Esophagus muscularis mucosa (tissue), 4 donors: ENCODE measurements at regions of chr4 and their contacts with region 1.

Region 1: GRCh38 chr4:189202182-189202868 is 738.3 kb upstream of the FRG1 start:
- DNase-seq: no peak
- H3K4me3 ChIP-seq: peak overlapping the region; percentile 15 to 48 (median 30)
- H3K27ac ChIP-seq: no peak overlapping the region
- H3K4me1 ChIP-seq: peaks cover 6 to 13% (median 12%) of the 10 kb centered on the region in 4 donors
- H3K27me3 ChIP-seq: no peaks in the 10 kb centered on the region
- CTCF ChIP-seq: peak; percentile 80 to 93 (median 86)
- EP300 ChIP-seq: no peak
- POLR2A ChIP-seq: no peak

Region 2: DNA sequence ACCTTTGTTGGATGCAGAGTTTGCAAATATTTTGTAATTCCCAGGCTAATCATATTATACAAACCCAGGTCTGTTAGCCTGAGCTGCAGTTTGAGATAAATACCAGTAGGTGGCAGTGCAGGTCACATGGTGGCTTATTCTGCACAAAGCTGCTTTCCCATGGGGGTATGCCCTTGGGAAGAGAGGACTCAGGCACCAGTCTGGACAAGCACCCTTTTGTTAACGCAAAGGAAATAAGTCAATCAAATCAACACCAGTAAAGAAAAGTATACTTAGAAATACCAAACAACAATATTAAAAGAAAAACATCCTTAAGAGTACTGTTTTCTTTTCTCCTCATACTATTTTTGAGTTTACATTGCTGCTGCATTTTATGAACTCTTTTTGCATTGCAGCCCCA is 1595.7 kb before region 1 on chr4:
- intact Hi-C with region 1: loop called (anchors 10 kb)
- DNase-seq: no peak
- H3K4me3 ChIP-seq: no peak overlapping the region
- H3K27ac ChIP-seq: no peak overlapping the region
- H3K4me1 ChIP-seq: peaks cover 0 to 11% (median 4%) of the 10 kb centered on the region in 4 donors
- H3K27me3 ChIP-seq: no peaks in the 10 kb centered on the region
- CTCF ChIP-seq: peak; percentile 76 to 85 (median 82)
- EP300 ChIP-seq: no peak
- POLR2A ChIP-seq: no peak

Region 3: GRCh38 chr4:189124149-189124758 is 78.1 kb before region 1 on chr4:
- intact Hi-C with region 1: no loop called
- DNase-seq: no peak
- H3K4me3 ChIP-seq: no peak overlapping the region
- H3K27ac ChIP-seq: no peak overlapping the region
- H3K4me1 ChIP-seq: no peaks in the 10 kb centered on the region
- H3K27me3 ChIP-seq: no peaks in the 10 kb centered on the region
- CTCF ChIP-seq: peak; percentile 38 to 54 (median 43)
- EP300 ChIP-seq: no peak
- POLR2A ChIP-seq: no peak